ENCODE measurements at regions of chrX and their contacts with region 1.

Region 1: GRCh38 chrX:78979789-78980464 is 34.7 kb downstream of the P2RY10 start:
- DNase-seq: peak; percentile 84
- ATAC-seq: peak; percentile 98
- H3K4me3 ChIP-seq: peak overlapping the region; percentile 37; the same call in 1 of the 2 replicates
- H3K27ac ChIP-seq: peak overlapping the region; percentile 76
- H3K4me1 ChIP-seq: peaks cover 14% of the 10 kb centered on the region; the same call in 1 of the 2 replicates
- H3K27me3 ChIP-seq: no peaks in the 10 kb centered on the region
- CTCF ChIP-seq: no peak
- EP300 ChIP-seq: peak; percentile 68 to 86; a peak in 3 of 4 replicates
- POLR2A ChIP-seq: no peak
- RAD21 ChIP-seq: no peak

Region 2: GRCh38 chrX:79065696-79066095 is 85.8 kb after region 1 on chrX:
- CTCF ChIA-PET with region 1: no interaction called
- POLR2A ChIA-PET with region 1: no interaction called
- RAD21 ChIA-PET with region 1: no interaction called
- SMC1A ChIA-PET with region 1: no interaction called
- in situ Hi-C with region 1: no loop called
- intact Hi-C with region 1: loop called (anchors 5 kb)
- DNase-seq: peak; percentile 51
- ATAC-seq: peak; percentile 98
- H3K4me3 ChIP-seq: no peak overlapping the region
- H3K27ac ChIP-seq: peak overlapping the region; percentile 34; the same call in 1 of the 2 replicates
- H3K4me1 ChIP-seq: peaks cover 3% of the 10 kb centered on the region; the same call in 1 of the 2 replicates
- H3K27me3 ChIP-seq: no peaks in the 10 kb centered on the region
- CTCF ChIP-seq: no peak
- EP300 ChIP-seq: no peak
- POLR2A ChIP-seq: no peak
- RAD21 ChIP-seq: no peak; the same call in 1 of the 2 replicates

Region 3: DNA sequence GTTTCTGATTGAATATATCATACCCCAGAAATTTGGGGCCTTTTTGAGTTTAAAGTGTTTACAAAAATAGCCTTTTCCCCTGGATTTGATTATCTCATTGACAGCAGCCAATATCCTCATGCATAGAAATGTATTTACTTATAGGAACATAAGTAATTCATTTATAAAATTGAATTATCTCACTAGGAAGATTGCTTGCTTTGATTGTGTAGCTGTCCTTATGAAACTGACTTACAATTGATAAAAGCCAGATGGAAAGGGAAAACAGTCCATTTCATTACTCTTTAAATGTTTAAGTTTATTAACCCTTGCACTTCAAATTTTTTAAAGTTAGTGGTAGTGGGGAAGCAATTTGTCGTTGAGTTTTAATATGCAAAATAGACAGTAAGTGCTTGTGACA is 724.4 kb after region 1 on chrX:
- CTCF ChIA-PET with region 1: no interaction called
- POLR2A ChIA-PET with region 1: interaction called, 10 read pairs
- RAD21 ChIA-PET with region 1: no interaction called
- SMC1A ChIA-PET with region 1: no interaction called
- in situ Hi-C with region 1: no loop called
- intact Hi-C with region 1: no loop called
- DNase-seq: no peak
- ATAC-seq: no peak
- H3K4me3 ChIP-seq: no peak overlapping the region
- H3K27ac ChIP-seq: no peak overlapping the region
- H3K4me1 ChIP-seq: no peaks in the 10 kb centered on the region
- H3K27me3 ChIP-seq: no peaks in the 10 kb centered on the region
- CTCF ChIP-seq: no peak
- EP300 ChIP-seq: no peak
- POLR2A ChIP-seq: no peak
- RAD21 ChIP-seq: no peak